ENCODE measurements at regions of chr1 and their contacts with region 1.

Region 1: DNA sequence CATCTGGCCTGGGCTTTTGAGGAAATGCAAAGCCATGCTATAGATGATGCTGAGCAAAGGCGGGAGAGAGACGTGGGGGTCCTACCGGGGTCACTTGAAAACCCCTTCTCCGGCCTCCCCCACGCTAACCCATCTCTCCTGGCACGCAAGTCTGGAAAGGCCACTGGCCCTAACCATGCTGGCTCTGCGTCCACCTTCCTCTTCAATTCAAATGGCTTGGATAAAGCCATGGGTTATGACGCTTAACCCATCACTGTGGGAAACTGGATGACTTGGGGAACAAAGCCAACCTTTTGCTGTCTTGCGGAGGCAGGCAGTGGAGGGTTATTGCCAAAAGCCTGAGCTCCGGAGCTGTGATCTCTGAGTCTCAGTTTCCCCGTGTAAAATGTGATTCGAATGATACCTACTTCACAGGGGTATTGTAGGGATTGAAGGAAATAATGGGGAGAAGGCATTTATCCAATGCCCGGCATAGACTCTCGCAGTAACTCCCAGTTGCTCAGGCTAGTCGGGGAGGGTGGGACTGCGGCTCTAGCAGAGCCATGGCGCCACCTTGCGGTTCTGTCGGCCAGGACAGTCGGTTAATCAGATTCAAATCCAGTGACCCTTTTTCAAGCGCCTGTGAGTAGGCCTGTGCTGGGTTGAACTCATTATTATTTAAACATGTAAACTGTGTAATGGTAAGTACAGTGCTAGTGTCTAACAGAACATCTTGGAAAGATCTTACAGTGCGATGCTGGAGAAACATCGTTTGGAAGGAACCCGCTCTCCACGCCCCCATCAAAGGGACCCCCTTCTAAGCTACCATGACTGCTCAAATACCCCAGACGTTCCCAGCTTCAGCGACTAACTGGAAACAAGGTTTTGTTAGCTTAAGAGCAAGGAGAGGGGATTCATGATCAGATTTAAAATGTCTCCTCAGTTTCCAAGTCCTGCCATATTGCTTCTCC is 20.3 kb downstream of the NEK2 start:
- DNase-seq: peak; percentile 90
- H3K4me3 ChIP-seq: no peak overlapping the region
- H3K27ac ChIP-seq: no peak overlapping the region
- H3K4me1 ChIP-seq: no peaks in the 10 kb centered on the region
- H3K27me3 ChIP-seq: no peaks in the 10 kb centered on the region
- CTCF ChIP-seq: peak; percentile 97

Region 2: GRCh38 chr1:210400043-210400840 is 1254.9 kb before region 1 on chr1:
- CTCF ChIA-PET with region 1: no interaction called
- POLR2A ChIA-PET with region 1: no interaction called
- intact Hi-C with region 1: loop called (anchors 10 kb)
- DNase-seq: peak; percentile 74
- H3K4me3 ChIP-seq: no peak overlapping the region
- H3K27ac ChIP-seq: no peak overlapping the region
- H3K4me1 ChIP-seq: no peaks in the 10 kb centered on the region
- H3K27me3 ChIP-seq: peaks cover 3% of the 10 kb centered on the region
- CTCF ChIP-seq: peak; percentile 92

Region 3: GRCh38 chr1:211133836-211134669 is 521.1 kb before region 1 on chr1 and contains the start of gene KCNH1:
- CTCF ChIA-PET with region 1: no interaction called
- POLR2A ChIA-PET with region 1: no interaction called
- intact Hi-C with region 1: loop called (anchors 10 kb)
- DNase-seq: peak; percentile 91
- H3K4me3 ChIP-seq: peak within 1 kb of the TSS; percentile 28
- H3K27ac ChIP-seq: no peak within 1 kb of the TSS
- H3K4me1 ChIP-seq: peaks cover 9% of the 10 kb centered on the region
- H3K27me3 ChIP-seq: peaks cover 76% of the 10 kb centered on the region
- CTCF ChIP-seq: peak; percentile 85
- total RNA-seq, gene KCNH1: not detected in 2 replicates

Region 4: GRCh38 chr1:211323156-211324063 is 331.7 kb before region 1 on chr1:
- CTCF ChIA-PET with region 1: interaction called, 3 read pairs
- POLR2A ChIA-PET with region 1: no interaction called
- intact Hi-C with region 1: loop called (anchors 2 kb)
- DNase-seq: peak; percentile 83
- H3K4me3 ChIP-seq: no peak overlapping the region
- H3K27ac ChIP-seq: no peak overlapping the region
- H3K4me1 ChIP-seq: no peaks in the 10 kb centered on the region
- H3K27me3 ChIP-seq: no peaks in the 10 kb centered on the region
- CTCF ChIP-seq: peak; percentile 88

Region 5: DNA sequence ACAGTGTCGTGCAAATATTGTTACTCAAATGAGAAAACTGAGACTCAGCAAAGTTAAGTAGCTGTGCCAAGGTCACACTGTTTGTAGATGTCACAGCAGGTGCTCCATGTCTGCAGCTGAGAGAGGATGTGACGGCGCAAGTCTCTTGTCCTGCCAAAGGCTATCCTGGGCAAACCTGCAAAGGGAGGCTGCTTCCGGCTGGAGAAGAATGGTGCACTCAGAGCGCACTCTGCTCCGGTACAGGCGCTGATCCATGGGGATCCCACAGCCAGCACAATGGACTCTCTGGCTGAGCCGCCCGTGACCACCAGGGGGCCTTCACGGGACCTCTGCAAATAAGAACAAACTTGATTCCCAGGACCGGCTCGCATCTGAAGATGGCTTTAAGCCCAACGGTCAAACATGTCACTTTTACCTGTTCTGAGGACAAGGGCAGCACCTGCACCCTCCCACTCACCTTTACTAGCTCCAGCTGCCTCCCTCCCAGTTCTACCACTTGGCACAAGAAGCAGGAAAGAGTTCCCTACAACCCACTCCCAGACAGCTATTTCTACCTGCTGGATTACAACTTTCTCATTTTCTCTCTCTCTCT is 185.1 kb before region 1 on chr1:
- CTCF ChIA-PET with region 1: interaction called, 3 read pairs
- POLR2A ChIA-PET with region 1: no interaction called
- intact Hi-C with region 1: loop called (anchors 1 kb)
- DNase-seq: peak; percentile 81
- H3K4me3 ChIP-seq: no peak overlapping the region
- H3K27ac ChIP-seq: no peak overlapping the region
- H3K4me1 ChIP-seq: no peaks in the 10 kb centered on the region
- H3K27me3 ChIP-seq: peaks cover 13% of the 10 kb centered on the region
- CTCF ChIP-seq: peak; percentile 96

Region 6: GRCh38 chr1:211514030-211514754 is 140.9 kb before region 1 on chr1:
- CTCF ChIA-PET with region 1: no interaction called
- POLR2A ChIA-PET with region 1: no interaction called
- intact Hi-C with region 1: loop called (anchors 1 kb)
- DNase-seq: peak; percentile 86
- H3K4me3 ChIP-seq: no peak overlapping the region
- H3K27ac ChIP-seq: no peak overlapping the region
- H3K4me1 ChIP-seq: no peaks in the 10 kb centered on the region
- H3K27me3 ChIP-seq: no peaks in the 10 kb centered on the region
- CTCF ChIP-seq: peak; percentile 82

Region 7: DNA sequence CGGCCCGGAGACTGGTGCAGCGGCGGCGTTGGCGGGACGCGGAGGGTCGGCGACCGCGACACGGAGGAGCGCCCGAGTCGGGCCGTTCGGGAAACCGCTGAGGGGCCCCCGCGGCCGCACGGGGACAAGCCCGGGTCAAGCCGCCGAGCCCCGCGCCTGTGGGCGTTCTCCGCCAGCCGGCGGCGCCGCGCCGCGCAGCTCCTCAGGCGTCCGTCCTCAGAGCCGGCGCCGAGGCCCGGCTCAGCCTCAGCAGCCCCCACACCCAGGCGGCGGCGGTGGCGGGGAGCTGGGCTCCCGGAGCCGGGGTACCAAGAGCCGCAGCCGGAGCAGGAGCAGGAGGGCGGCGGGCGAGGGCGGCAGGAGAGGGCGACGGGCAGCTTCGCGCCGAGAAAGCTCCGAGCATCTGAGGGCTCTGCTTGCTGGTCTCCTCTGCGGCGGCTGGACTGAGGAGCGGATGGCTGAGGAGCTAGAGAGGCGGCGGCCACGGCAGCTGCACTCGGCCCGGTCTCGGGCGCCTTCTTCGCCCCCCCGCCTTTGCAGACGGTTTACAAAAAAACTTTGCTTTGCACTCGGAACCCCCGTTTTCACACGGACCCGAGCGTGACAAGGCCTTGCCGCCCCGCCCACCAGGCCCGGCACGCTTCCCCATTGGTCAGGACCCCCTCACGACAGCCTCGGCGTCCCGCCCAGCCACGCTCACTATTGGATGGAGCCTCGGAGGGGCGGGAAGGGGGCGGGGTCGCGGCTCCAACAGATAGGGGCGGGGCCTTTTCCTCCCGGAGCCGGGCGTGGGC is 76.3 kb before region 1 on chr1 and contains the start of gene SLC30A1:
- CTCF ChIA-PET with region 1: no interaction called
- POLR2A ChIA-PET with region 1: no interaction called
- intact Hi-C with region 1: loop called (anchors 1 kb)
- DNase-seq: peak; percentile 99
- H3K4me3 ChIP-seq: peak within 1 kb of the TSS; percentile 86
- H3K27ac ChIP-seq: peak within 1 kb of the TSS; percentile 80
- H3K4me1 ChIP-seq: peaks cover 21% of the 10 kb centered on the region
- H3K27me3 ChIP-seq: no peaks in the 10 kb centered on the region
- CTCF ChIP-seq: no peak
- total RNA-seq, gene SLC30A1: 5.1 and 12.2 TPM in 2 replicates

Region 8: DNA sequence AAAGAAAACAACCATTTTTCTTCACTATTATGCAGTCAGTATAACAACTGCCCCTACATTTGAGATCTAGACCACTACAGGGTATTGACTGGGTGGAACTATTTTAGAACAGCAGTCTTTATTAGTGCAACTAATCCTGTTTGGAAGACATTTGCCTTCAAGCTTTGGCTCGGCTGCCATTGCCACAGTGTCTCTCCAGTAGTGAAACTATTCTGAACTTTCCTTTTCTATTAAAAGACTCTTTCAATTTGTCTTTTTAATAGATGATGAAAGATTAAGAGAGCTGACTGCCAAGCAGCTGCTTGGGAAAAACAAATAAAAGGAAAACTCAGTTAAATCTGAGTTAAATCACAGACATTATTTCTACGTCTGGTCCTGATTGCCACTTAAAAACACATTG is 126.1 kb after region 1 on chr1:
- CTCF ChIA-PET with region 1: no interaction called
- POLR2A ChIA-PET with region 1: no interaction called
- intact Hi-C with region 1: no loop called
- DNase-seq: peak; percentile 10
- H3K4me3 ChIP-seq: no peak overlapping the region
- H3K27ac ChIP-seq: peak overlapping the region; percentile 41
- H3K4me1 ChIP-seq: peaks cover 6% of the 10 kb centered on the region
- H3K27me3 ChIP-seq: no peaks in the 10 kb centered on the region
- CTCF ChIP-seq: no peak

Region 9: DNA sequence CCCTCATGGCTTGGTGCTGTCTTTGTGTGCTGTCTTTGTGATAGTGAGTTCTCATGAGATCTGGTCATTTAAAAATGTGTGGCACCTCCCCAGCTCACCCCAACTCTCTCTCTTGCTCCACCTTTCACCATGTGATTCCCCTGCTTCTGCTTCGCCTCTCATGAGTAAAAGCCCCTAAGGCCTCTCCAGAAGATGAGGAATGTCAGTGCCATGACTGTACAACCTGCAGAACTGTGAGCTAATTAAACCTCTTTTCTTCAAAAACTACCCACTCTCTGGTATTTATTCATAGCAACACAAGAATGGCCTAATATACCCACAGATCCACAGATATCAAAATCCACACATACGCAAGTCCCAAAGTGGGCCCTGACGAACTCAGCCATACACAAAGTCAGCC is 541.2 kb after region 1 on chr1:
- CTCF ChIA-PET with region 1: no interaction called
- POLR2A ChIA-PET with region 1: no interaction called
- intact Hi-C with region 1: no loop called
- DNase-seq: no peak
- H3K4me3 ChIP-seq: no peak overlapping the region
- H3K27ac ChIP-seq: no peak overlapping the region
- H3K4me1 ChIP-seq: no peaks in the 10 kb centered on the region
- H3K27me3 ChIP-seq: no peaks in the 10 kb centered on the region
- CTCF ChIP-seq: no peak

Measured in A673 (cell line).